Left colon (tissue), 2 donors: ENCODE measurements at regions of chr2 and their contacts with region 1.

Region 1: GRCh38 chr2:24984912-24985311 is 13.2 kb upstream of the DNAJC27 start:
- DNase-seq: peak in 1 of 2 donors; percentile 48
- ATAC-seq: no peak

Region 2: GRCh38 chr2:25041928-25042320 is 57.0 kb after region 1 on chr2 and contains the start of gene EFR3B:
- intact Hi-C with region 1: loop called in 1 of 2 experiments (anchors 10 kb)
- DNase-seq: peak; percentile 96
- ATAC-seq: peak; percentile 91
- total RNA-seq, gene EFR3B: 0.98 to 2.5 TPM

Region 3: DNA sequence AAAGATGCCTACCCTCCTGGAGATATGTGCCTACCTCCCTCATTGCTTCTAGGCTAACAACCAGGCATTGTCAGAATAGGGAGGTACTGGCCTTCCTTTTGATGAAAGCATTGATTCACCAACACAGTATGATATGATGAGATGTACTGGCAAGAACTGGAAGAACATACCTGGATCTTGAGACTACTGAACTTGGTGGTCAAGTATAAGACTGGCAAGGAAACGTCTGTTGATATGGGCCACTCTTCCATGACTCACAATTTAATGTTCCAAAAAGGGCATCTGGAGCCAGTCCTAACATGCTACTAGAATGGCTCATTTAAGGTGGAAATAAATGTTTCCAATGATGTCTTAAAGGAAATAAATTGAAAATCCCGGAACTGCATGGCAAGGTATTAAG is 670.4 kb after region 1 on chr2:
- intact Hi-C with region 1: no loop called
- DNase-seq: no peak
- ATAC-seq: no peak